ENCODE measurements at regions of chr5 and their contacts with region 1.

Region 1: DNA sequence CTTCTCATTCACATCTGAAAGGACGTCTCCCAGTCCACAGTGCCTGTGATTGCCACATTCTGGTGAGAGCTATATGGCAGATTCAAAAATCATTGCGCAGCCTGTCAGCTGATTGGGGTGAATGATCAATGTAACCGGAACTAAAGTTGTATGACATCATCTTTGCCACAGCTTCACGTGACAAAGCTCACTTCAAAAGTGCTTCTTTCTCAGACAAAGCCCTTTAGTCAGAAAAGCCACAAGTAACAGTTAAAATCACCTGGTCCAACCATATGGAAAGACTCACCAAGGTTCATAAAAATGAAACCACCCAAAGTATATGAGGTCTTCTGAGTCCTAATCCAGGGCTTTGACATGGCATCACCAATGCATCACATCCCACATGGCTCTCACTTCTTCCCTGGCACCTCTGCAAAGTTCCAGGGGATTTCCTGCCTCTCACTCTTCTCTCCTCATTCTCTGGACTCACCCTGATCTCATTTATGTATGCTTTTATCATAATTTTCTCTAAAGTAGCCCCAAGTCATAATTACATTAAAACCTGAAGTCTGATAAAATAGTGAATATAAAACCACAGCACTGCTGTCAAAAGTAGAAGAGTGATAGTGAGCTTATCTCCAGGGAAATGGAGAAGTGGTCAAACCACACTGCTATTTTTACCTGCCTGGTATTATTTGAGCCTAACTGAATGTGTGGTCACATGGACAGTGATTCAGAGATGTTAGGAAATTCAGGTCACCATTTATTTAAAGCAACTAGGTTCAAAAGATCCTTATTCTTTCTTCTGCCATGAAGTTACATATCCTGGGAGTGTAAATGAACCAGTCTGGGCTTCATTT is 193.1 kb upstream of the PTGER4 start:
- DNase-seq: no peak
- ATAC-seq: peak; percentile 38
- H3K4me3 Mint-ChIP-seq: peak overlapping the region; percentile 64
- H3K27ac Mint-ChIP-seq: peak overlapping the region; percentile 87
- H3K4me1 Mint-ChIP-seq: peaks cover 82% of the 10 kb centered on the region
- H3K27me3 Mint-ChIP-seq: no peaks in the 10 kb centered on the region
- CTCF ChIP-seq: no peak

Region 2: DNA sequence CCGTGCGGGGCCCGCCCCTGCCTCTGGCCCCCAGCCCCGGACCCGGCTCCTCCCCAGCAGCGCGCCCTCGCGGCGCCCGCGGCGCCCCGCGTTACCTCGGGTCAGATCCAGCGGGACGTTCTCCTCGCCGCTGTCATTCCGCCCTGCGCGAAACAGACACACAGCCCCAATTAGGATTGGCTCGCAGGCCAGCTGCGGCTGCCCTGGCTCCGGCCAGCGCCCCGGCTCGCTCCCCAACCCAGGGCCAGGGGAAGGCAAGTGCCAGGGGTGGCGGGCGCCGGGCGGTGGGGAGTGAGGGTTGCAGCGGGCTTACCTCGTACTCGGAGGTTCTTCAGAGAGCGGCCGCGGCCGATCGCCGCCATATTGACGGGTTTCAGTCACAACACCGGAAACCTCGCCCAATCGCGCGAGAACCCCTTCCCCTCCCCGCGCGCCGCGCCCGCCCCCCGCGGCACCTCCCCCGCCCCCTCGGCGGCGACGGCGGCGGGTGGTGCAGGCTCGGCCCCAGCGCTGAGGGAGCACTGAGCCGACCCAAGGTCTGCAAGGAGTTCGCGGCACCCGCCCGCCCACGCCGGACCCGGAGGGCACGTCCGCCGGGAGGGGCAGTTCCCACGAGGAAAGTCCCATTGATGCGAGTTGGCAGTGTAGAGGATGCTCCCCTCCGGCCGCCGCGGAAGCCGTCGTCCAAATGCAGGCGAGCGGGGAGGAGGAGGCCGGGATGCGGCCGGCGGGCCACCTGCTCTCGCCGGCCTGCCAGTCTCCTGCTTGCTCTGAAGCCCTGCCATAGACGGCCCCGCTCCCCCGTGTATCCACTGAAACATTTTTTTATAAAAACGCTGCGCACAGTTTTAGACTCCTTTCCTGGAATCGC is 1412.4 kb before region 1 on chr5 and contains the start of gene RICTOR:
- CTCF ChIA-PET with region 1: no interaction called
- POLR2A ChIA-PET with region 1: no interaction called
- intact Hi-C with region 1: loop called (anchors 10 kb)
- DNase-seq: peak; percentile 92
- ATAC-seq: peak; percentile 81
- H3K4me3 Mint-ChIP-seq: peak within 1 kb of the TSS; percentile 97
- H3K27ac Mint-ChIP-seq: peak within 1 kb of the TSS; percentile 96
- H3K4me1 Mint-ChIP-seq: peaks cover 53% of the 10 kb centered on the region
- H3K27me3 Mint-ChIP-seq: no peaks in the 10 kb centered on the region
- CTCF ChIP-seq: no peak
- total RNA-seq, gene RICTOR: 46.4 and 51.8 TPM in 2 replicates

Region 3: DNA sequence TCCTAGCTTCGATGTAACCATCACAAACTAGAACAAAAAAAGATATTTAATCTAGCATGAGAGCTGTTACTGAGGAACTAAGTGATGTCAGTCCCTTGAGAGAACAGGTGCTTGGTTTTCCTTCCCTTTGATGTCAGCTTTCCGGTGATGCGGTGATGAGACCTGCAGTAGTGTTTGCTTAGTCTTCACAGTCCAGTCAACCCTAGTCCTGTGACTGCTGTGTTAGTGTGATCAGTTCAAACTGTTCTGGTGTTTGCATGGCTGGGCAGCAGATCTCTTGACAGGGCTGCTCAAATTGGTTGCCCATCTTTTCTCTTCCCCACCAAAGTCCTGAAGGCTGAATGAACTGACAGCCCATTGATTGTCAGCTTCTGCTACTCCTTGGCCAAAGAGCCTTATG is 453.2 kb before region 1 on chr5:
- CTCF ChIA-PET with region 1: no interaction called
- POLR2A ChIA-PET with region 1: no interaction called
- intact Hi-C with region 1: loop called (anchors 1 kb)
- DNase-seq: peak; percentile 31
- ATAC-seq: peak; percentile 98
- H3K4me3 Mint-ChIP-seq: peak overlapping the region; percentile 21
- H3K27ac Mint-ChIP-seq: peak overlapping the region; percentile 80
- H3K4me1 Mint-ChIP-seq: peaks cover 36% of the 10 kb centered on the region
- H3K27me3 Mint-ChIP-seq: no peaks in the 10 kb centered on the region
- CTCF ChIP-seq: no peak

Region 4: GRCh38 chr5:40106847-40107246 is 379.8 kb before region 1 on chr5:
- CTCF ChIA-PET with region 1: no interaction called
- POLR2A ChIA-PET with region 1: no interaction called
- intact Hi-C with region 1: no loop called
- DNase-seq: no peak
- ATAC-seq: no peak
- H3K4me3 Mint-ChIP-seq: no peak overlapping the region
- H3K27ac Mint-ChIP-seq: no peak overlapping the region
- H3K4me1 Mint-ChIP-seq: no peaks in the 10 kb centered on the region
- H3K27me3 Mint-ChIP-seq: no peaks in the 10 kb centered on the region
- CTCF ChIP-seq: no peak

Region 5: GRCh38 chr5:40277161-40277906 is 209.3 kb before region 1 on chr5:
- CTCF ChIA-PET with region 1: no interaction called
- POLR2A ChIA-PET with region 1: interaction called, 3 read pairs
- intact Hi-C with region 1: loop called (anchors 5 kb)
- DNase-seq: no peak
- ATAC-seq: peak; percentile 90
- H3K4me3 Mint-ChIP-seq: peak overlapping the region; percentile 30
- H3K27ac Mint-ChIP-seq: peak overlapping the region; percentile 77
- H3K4me1 Mint-ChIP-seq: peaks cover 30% of the 10 kb centered on the region
- H3K27me3 Mint-ChIP-seq: no peaks in the 10 kb centered on the region
- CTCF ChIP-seq: no peak

Region 6: GRCh38 chr5:40386289-40386688 is 100.4 kb before region 1 on chr5:
- CTCF ChIA-PET with region 1: no interaction called
- POLR2A ChIA-PET with region 1: interaction called, 5 read pairs
- intact Hi-C with region 1: loop called (anchors 1 kb)
- DNase-seq: no peak
- ATAC-seq: peak; percentile 78
- H3K4me3 Mint-ChIP-seq: peak overlapping the region; percentile 25
- H3K27ac Mint-ChIP-seq: peak overlapping the region; percentile 66
- H3K4me1 Mint-ChIP-seq: peaks cover 50% of the 10 kb centered on the region
- H3K27me3 Mint-ChIP-seq: no peaks in the 10 kb centered on the region
- CTCF ChIP-seq: no peak

Region 7: DNA sequence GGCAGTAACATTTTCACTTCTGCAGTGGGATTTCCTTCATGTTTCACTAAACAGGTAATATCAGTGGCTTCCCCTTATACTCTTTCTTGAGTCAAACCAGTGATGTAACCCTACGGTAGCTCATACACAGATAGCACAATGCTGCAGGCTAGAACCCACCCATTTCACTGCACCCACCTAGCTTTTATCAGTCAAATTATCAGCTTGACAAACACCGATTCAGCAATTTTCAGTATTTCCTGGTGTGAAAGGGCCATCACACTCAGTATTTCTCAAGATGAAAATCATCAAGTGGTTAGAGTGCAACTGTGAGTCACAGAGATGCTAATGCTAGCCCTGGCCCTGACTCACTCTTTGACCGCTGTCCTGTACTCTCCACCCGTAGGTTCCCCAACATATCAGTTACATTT is 49.2 kb before region 1 on chr5:
- CTCF ChIA-PET with region 1: interaction called, 5 read pairs
- POLR2A ChIA-PET with region 1: interaction called, 13 read pairs
- intact Hi-C with region 1: loop called (anchors 1 kb)
- DNase-seq: no peak
- ATAC-seq: peak; percentile 80
- H3K4me3 Mint-ChIP-seq: peak overlapping the region; percentile 56
- H3K27ac Mint-ChIP-seq: peak overlapping the region; percentile 54
- H3K4me1 Mint-ChIP-seq: peaks cover 45% of the 10 kb centered on the region
- H3K27me3 Mint-ChIP-seq: no peaks in the 10 kb centered on the region
- CTCF ChIP-seq: no peak

Region 8: DNA sequence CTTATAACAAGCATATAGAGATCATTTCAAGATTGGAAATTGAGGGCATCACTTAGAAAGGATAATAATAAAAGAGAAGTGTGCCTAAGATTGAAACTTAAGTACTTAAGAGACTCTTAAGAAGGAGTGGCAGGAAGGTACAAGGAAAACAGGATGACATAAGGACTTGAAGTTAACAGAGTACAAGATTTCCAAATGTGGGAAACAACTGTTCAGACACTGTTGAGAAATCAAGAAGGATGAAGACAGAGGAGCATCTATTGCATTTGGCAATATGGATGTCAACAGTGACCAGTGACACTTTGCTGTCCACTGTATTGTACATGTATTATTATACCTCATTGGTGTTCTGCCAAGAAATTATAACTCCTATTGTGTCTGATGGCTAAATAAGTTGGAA is 35.3 kb after region 1 on chr5:
- CTCF ChIA-PET with region 1: no interaction called
- POLR2A ChIA-PET with region 1: no interaction called
- intact Hi-C with region 1: no loop called
- DNase-seq: no peak
- ATAC-seq: no peak
- H3K4me3 Mint-ChIP-seq: no peak overlapping the region
- H3K27ac Mint-ChIP-seq: no peak overlapping the region
- H3K4me1 Mint-ChIP-seq: no peaks in the 10 kb centered on the region
- H3K27me3 Mint-ChIP-seq: no peaks in the 10 kb centered on the region
- CTCF ChIP-seq: no peak

Region 9: DNA sequence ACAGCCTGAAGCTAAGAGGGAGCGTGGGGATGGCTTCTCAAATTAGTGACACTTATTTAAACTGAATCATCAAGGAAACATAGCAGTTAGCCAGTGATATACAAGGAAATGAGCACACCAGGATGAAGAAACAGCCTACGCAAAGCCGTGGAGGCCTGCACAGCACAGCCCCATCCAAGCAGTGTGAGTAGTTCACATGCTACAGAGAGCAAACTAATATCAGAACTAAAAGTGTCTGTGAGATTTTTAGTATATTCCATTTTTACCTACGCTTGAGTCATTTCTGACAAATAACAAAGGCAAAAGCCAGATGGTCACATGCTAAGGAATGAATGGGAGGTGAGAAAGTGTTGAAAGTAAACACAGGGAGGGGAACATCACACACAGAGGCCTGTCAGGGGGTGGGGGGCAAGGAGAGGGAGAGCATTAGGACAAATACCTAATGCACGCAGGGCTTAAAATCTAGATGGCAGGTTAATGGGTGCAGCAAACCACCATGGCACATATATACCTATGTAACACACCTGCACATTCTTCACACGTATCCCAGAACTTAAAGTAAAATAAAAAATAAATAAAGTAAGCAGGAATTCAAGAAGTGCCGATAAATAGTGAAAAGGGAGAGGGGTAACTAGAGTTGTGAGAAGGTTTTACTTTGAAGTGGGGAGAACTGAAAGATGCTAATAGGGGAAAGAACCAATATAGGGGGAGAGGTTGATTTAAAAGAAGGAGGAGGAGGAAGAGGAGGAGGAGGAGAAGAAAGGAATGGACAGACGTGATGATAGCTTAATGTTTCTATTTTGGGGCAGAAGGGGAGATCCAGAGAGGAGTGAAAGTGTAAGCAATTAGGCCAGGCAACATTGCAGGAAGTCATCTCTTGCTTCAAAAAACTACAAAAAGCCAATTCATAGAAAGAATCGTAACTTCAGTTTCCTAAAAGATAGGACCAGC is 92.1 kb after region 1 on chr5:
- CTCF ChIA-PET with region 1: no interaction called
- POLR2A ChIA-PET with region 1: no interaction called
- intact Hi-C with region 1: loop called (anchors 1 kb)
- DNase-seq: no peak
- ATAC-seq: peak; percentile 89
- H3K4me3 Mint-ChIP-seq: peak overlapping the region; percentile 63
- H3K27ac Mint-ChIP-seq: peak overlapping the region; percentile 73
- H3K4me1 Mint-ChIP-seq: peaks cover 19% of the 10 kb centered on the region
- H3K27me3 Mint-ChIP-seq: no peaks in the 10 kb centered on the region
- CTCF ChIP-seq: no peak

Region 10: DNA sequence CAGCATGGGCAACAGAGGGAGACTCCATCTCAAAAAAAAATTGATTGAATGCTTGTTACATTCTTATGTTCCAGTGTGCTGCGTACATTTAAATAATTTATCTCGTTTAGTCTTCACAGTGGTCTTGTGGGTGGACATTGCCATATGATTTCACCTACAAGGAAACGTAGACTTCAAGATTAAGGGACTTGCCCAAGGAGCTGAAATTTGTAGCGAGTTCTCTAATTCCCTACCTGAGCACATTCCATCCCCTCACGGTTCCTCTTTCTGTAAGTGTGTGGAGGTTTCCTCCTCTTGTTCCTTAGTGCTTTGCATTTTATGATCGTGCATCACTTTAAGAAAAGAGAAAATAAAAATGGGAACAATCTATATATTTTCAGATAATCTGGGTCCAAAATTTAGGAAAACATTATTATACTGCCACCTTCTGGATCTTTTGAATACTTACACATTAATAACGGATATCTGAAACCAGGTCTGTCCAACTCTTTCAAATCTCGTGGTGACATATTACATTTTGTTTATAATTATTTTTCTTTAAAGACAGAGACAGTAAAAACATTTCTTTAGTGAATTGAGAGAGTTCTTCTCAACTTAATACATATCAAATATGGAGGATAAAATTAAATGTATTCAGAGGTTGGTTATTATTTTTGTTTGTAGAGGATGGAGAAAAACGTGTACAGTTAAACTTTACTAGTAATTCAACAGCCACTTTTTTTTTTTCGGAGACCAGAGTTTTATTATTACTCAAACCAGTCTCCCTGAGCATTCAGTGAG is 392.7 kb after region 1 on chr5:
- CTCF ChIA-PET with region 1: no interaction called
- POLR2A ChIA-PET with region 1: no interaction called
- intact Hi-C with region 1: no loop called
- DNase-seq: no peak
- ATAC-seq: peak; percentile 28
- H3K4me3 Mint-ChIP-seq: no peak overlapping the region
- H3K27ac Mint-ChIP-seq: no peak overlapping the region
- H3K4me1 Mint-ChIP-seq: no peaks in the 10 kb centered on the region
- H3K27me3 Mint-ChIP-seq: no peaks in the 10 kb centered on the region
- CTCF ChIP-seq: peak; percentile 20

Measured in activated B cell treated with CpG ODN at 0.5 μM for 24 hours (primary cell).